ENCODE measurements at regions of chr19 and their contacts with region 1.

Region 1: GRCh38 chr19:4352701-4353121 is 9.3 kb downstream of the MPND start:
- DNase-seq: no peak
- H3K4me3 ChIP-seq: no peak overlapping the region
- H3K27ac ChIP-seq: peak overlapping the region in 1 of 4 donors; percentile 14
- H3K4me1 ChIP-seq: no peaks in the 10 kb centered on the region
- H3K27me3 ChIP-seq: no peaks in the 10 kb centered on the region
- CTCF ChIP-seq: peak; percentile 20 to 93 (median 74)
- POLR2A ChIP-seq: no peak

Region 2: DNA sequence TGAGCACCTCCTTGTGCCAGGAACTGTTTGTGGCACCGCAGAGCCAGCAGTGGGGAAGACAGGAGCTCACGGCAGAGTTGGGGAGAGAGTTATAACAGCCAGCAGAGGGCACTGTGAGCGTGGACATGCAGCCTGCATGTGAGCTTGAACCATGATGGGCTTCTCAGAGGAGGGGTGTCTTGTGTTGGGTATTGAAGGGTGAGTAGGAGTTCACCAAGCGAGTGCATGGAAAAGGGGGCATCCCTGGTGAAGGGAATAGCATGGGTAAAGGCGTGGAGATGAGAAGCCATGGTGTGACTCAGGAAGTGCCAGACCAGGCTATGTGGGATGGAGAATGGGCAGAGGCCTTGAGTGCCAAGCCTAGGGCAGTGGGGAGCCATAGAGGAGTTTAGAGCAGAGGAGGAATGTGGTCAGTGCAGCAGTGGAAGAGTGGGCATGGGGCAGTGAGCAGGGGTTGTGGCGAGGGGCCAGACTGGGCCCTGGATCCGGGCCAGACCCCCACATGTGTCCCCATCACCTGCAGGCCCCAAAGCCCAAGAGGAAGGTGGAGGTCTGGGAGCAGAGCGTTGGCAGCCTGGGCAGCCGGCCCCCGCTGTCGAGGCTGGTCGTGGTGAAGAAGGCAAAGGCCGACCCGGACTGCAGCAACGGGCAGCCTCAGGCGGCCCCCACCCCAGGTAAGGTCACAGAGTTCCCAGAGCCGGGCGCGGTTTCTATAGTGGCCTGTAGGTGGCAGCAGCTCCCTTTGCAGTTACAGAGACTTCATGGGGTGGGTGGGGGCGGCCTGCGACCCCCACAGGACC is 85.4 kb before region 1 on chr19:
- intact Hi-C with region 1: loop called (anchors 5 kb)
- DNase-seq: no peak
- H3K4me3 ChIP-seq: no peak overlapping the region
- H3K27ac ChIP-seq: no peak overlapping the region
- H3K4me1 ChIP-seq: no peaks in the 10 kb centered on the region
- H3K27me3 ChIP-seq: no peaks in the 10 kb centered on the region
- CTCF ChIP-seq: peak; percentile 67 to 79 (median 72)
- POLR2A ChIP-seq: no peak

Region 3: DNA sequence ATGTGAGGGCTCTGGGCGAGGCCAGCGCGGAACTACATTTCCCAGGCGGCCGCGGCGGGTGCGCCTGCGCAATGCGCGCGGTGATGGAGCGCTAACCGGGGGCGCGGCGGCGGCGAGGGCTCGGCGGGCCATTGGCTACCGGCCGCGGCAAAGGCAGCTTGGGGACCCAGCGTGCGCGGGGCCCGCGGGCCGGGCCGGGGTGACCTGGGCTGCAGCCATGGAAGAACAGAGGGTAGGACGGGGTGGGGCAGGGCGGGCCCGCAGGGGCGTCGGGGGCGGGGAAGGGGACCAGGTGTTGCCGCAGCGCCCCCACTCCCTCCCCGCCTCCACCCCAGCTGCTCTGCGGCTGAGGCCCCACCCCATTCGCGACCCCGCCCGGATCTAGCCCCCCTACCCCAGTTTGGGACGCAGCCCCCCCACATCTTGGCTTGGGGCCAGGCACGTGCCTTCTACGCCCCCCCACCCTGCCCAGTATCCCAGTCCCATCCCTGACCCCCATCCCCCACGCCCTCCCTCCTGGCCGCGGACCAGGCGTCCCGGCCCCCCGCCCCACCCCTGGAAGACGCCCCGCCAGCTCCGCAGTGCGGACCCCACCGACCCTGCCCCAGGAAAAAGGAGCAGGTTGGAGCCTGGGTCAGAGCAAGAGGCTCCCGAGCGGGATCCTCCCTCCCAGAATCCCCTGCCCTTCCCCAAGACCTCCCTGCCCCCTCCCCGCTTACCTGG is 48.0 kb before region 1 on chr19 and contains the start of gene FSD1:
- intact Hi-C with region 1: no loop called
- DNase-seq: no peak
- H3K4me3 ChIP-seq: peak within 1 kb of the TSS in 3 of 4 donors; percentile 10 to 58 (median 41)
- H3K27ac ChIP-seq: no peak within 1 kb of the TSS
- H3K4me1 ChIP-seq: peaks cover 0 to 7% (median 6%) of the 10 kb centered on the region in 3 donors
- H3K27me3 ChIP-seq: peaks cover 0 to 39% (median 0%) of the 10 kb centered on the region in 4 donors
- CTCF ChIP-seq: no peak
- POLR2A ChIP-seq: no peak
- total RNA-seq, gene FSD1: 0.18 to 0.61 TPM in 2 of 4 donors, not detected in the others

Region 4: GRCh38 chr19:4471403-4472173 is 118.9 kb after region 1 on chr19:
- intact Hi-C with region 1: no loop called
- DNase-seq: peak; percentile 99
- H3K4me3 ChIP-seq: peak overlapping the region; percentile 64 to 93 (median 89)
- H3K27ac ChIP-seq: peak overlapping the region; percentile 79 to 93 (median 92)
- H3K4me1 ChIP-seq: peaks cover 23 to 37% (median 25%) of the 10 kb centered on the region in 3 donors
- H3K27me3 ChIP-seq: no peaks in the 10 kb centered on the region
- CTCF ChIP-seq: no peak
- POLR2A ChIP-seq: peak in 3 of 4 donors; percentile 37 to 57 (median 41)

Measured in esophagus squamous epithelium (tissue), 5 donors.